Thyroid gland (tissue), 4 donors: ENCODE measurements at regions of chr16 and their contacts with region 1.

Region 1: DNA sequence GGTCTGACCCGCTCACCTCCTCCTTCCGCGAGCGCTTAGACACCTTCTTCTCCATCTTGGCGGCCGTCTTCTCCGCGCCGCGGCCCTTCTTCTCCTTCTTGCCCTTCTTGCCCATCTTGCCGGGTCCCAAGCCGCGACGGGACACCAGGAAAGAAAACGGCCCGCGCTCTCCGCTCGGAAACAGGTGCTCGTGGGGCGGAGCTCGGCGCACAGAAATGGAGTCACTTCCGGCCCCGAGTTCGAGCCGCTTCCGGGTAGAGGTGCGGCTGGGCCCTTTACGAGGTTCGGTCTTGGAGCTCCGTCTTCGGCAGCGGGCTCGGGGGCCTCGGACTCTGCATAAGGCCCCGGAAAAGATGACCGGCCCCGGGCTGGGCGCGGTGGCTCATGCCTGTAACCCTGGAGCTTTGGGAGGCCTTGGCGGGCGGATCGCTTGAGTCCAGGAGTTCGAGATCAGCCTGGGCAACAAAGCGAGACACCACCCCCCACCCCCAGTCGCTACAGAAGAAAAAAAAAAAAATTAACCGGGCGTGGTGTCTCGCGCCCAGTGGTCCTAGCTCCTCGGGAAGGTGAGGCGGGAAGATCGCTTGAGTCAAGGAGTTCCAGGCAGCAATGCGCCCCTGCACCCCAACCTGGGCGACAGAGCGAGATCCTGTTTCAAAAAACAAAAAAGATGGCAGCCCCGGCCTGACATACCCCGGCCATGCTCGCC is at the start of gene KLHDC4:
- DNase-seq: peak; percentile 87
- H3K4me3 ChIP-seq: peak within 1 kb of the TSS; percentile 71 to 99 (median 94)
- H3K27ac ChIP-seq: peak within 1 kb of the TSS; percentile 76 to 89 (median 78)
- H3K4me1 ChIP-seq: peaks cover 10 to 17% of the 10 kb centered on the region in 2 donors
- H3K27me3 ChIP-seq: no peaks in the 10 kb centered on the region
- CTCF ChIP-seq: no peak
- POLR2A ChIP-seq: peak in 1 of 2 donors; percentile 79
- total RNA-seq, gene KLHDC4: 19.9 to 40.9 (median 30.3) TPM

Region 2: GRCh38 chr16:87391950-87392822 is 373.7 kb before region 1 on chr16 and contains the start of gene MAP1LC3B:
- intact Hi-C with region 1: loop called (anchors 10 kb)
- DNase-seq: peak; percentile 95
- H3K4me3 ChIP-seq: peak within 1 kb of the TSS; percentile 53 to 94 (median 58)
- H3K27ac ChIP-seq: peak within 1 kb of the TSS; percentile 97 to 99 (median 97)
- H3K4me1 ChIP-seq: peaks cover 31 to 45% of the 10 kb centered on the region in 2 donors
- H3K27me3 ChIP-seq: no peaks in the 10 kb centered on the region
- CTCF ChIP-seq: peak in 1 of 6 experiments; percentile 15
- POLR2A ChIP-seq: peak; percentile 95 to 100
- total RNA-seq, gene MAP1LC3B: 51.8 to 84.3 (median 67.3) TPM

Region 3: DNA sequence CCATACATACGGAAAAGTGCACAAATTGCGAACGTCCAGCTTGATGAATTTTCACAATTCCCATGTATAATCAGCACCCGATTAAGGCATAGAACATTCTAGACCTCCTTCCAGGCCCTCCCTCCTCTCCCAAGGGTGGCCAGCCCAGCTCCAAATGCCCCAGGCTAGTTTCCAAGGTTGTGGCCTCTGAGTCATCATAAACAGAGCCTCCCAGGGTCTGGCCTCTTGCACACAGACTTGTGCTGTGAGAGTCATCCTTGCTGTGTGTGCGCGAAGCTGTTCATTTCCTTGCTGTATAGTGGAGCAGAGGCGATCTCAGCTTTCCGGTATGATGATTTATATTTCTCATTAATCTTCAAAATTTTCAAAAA is 184.1 kb before region 1 on chr16:
- intact Hi-C with region 1: loop called (anchors 10 kb)
- DNase-seq: peak; percentile 20 to 24
- H3K4me3 ChIP-seq: no peak overlapping the region
- H3K27ac ChIP-seq: peak overlapping the region; percentile 73 to 84 (median 79)
- H3K4me1 ChIP-seq: peaks cover 0 to 7% of the 10 kb centered on the region in 2 donors
- H3K27me3 ChIP-seq: no peaks in the 10 kb centered on the region
- CTCF ChIP-seq: no peak
- POLR2A ChIP-seq: no peak

Region 4: GRCh38 chr16:87895641-87896141 is 129.8 kb after region 1 on chr16:
- intact Hi-C with region 1: no loop called
- DNase-seq: no peak
- H3K4me3 ChIP-seq: no peak overlapping the region
- H3K27ac ChIP-seq: no peak overlapping the region
- H3K4me1 ChIP-seq: peaks cover 0 to 5% of the 10 kb centered on the region in 2 donors
- H3K27me3 ChIP-seq: no peaks in the 10 kb centered on the region
- CTCF ChIP-seq: no peak
- POLR2A ChIP-seq: no peak

Region 5: DNA sequence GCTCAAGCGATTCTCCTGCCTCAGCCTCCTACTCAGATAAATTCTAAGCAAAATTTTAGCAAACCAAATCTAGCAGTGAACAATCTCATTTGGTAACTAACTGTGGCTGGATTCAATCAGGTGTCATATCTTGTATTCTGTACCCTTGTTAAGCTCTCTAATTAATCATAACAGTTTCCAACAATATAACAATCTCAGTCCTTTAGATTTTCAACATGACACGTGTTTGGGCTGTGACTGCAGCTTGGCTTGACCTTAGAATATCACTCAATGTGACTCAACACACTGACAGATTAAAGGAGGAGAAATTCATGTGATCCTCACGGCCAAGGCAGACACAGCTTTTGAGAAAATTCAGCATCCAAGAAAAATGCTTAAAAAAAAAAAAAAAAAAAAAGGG is 319.0 kb after region 1 on chr16:
- intact Hi-C with region 1: no loop called
- DNase-seq: no peak
- H3K4me3 ChIP-seq: no peak overlapping the region
- H3K27ac ChIP-seq: no peak overlapping the region
- H3K4me1 ChIP-seq: no peaks in the 10 kb centered on the region
- H3K27me3 ChIP-seq: no peaks in the 10 kb centered on the region
- CTCF ChIP-seq: no peak
- POLR2A ChIP-seq: no peak